ENCODE measurements at regions of chr22 and their contacts with region 1.

Region 1: GRCh38 chr22:24920029-24920428 is 26.5 kb downstream of the LHFPL7 start:
- DNase-seq: no peak
- ATAC-seq: no peak
- H3K4me3 Mint-ChIP-seq: no peak overlapping the region
- H3K27ac Mint-ChIP-seq: no peak overlapping the region
- H3K4me1 Mint-ChIP-seq: no peaks in the 10 kb centered on the region
- H3K27me3 Mint-ChIP-seq: no peaks in the 10 kb centered on the region
- CTCF ChIP-seq: no peak

Region 2: GRCh38 chr22:24859587-24859986 is 60.4 kb before region 1 on chr22:
- CTCF ChIA-PET with region 1: no interaction called
- POLR2A ChIA-PET with region 1: no interaction called
- intact Hi-C with region 1: loop called (anchors 10 kb)
- DNase-seq: no peak
- ATAC-seq: no peak
- H3K4me3 Mint-ChIP-seq: no peak overlapping the region
- H3K27ac Mint-ChIP-seq: no peak overlapping the region
- H3K4me1 Mint-ChIP-seq: no peaks in the 10 kb centered on the region
- H3K27me3 Mint-ChIP-seq: peaks cover 4% of the 10 kb centered on the region
- CTCF ChIP-seq: no peak

Region 3: GRCh38 chr22:24951942-24952836 is 32.2 kb after region 1 on chr22 and contains the start of gene KIAA1671:
- CTCF ChIA-PET with region 1: no interaction called
- POLR2A ChIA-PET with region 1: no interaction called
- intact Hi-C with region 1: no loop called
- DNase-seq: peak; percentile 73
- ATAC-seq: peak; percentile 90
- H3K4me3 Mint-ChIP-seq: peak within 1 kb of the TSS; percentile 68
- H3K27ac Mint-ChIP-seq: no peak within 1 kb of the TSS
- H3K4me1 Mint-ChIP-seq: peaks cover 14% of the 10 kb centered on the region
- H3K27me3 Mint-ChIP-seq: peaks cover 72% of the 10 kb centered on the region
- CTCF ChIP-seq: no peak
- total RNA-seq, gene KIAA1671: 0.02 and 0.04 TPM in 2 replicates